ENCODE measurements at regions of chr19 and their contacts with region 1.

Region 1: DNA sequence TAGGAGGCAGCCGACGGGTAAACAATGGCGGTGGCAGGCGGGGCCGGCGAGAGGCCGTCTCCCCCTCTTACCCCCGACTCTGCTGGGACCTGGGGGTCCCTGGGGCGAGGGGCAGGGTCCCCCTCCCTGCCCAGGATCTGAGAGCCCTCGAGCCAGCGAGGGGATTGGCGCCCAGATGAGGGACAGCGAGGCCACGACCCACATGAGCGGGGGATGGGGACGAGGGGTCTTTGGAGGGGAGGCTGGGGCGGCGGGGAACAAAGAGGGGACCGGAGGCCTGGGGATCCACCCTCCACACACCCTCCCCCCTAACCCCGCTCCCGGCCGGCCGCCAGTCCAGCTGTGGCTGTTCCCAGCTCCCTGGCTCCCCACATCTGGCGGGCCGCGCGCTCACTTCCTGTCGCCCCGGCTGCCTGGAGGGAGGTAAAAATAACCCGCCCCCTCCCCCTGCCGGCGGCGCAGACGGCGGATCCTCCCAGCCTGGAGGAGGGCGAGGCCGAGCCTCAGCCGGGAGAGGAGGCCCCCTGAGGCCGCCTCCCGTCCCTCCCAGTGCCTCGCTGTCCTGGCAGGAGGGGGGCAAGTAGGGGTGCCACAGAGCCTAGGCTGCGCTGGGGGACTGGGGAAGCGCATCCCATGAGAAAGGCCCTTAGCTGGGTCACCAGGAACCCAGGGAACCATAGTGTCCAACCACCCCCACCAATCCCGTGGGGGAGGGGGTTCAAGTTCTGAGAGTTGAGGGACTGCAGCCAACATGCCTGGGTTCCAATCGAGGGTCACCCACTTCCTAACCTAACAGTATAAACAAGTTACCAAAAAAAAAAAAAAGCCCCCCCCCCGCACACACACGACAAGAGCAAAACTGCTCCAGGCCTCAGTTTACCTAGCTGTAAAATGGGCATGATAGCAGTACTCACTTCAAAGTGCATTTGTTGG is 29.3 kb upstream of the NANOS3 start:
- DNase-seq: no peak
- ATAC-seq: peak; percentile 46
- H3K4me3 ChIP-seq: peak overlapping the region; percentile 31 to 45
- H3K27ac ChIP-seq: peak overlapping the region; percentile 98
- H3K4me1 ChIP-seq: peaks cover 74% of the 10 kb centered on the region
- H3K27me3 ChIP-seq: no peaks in the 10 kb centered on the region
- CTCF ChIP-seq: no peak

Region 2: DNA sequence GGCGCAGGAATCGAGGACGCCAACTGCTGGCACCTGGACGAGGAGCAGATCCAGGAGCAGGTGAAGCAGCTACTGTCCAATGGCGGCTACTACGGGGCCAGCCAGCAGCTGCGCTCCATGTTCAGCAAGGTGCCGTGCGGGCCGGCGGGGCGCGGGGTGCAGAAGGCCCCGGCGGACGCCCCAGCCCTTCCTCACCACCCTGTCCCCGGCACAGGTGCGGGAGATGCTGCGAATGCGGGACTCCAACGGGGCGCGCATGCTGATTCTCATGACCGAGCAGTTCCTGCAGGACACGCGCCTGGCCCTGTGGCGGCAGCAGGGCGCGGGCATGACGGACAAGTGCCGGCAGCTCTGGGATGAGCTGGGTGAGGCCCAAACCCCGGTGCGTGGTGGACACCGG is 38.8 kb before region 1 on chr19:
- CTCF ChIA-PET with region 1: no interaction called
- POLR2A ChIA-PET with region 1: interaction called, 11 read pairs
- in situ Hi-C with region 1: no loop called
- intact Hi-C with region 1: no loop called
- DNase-seq: no peak
- ATAC-seq: no peak
- H3K4me3 ChIP-seq: no peak overlapping the region
- H3K27ac ChIP-seq: no peak overlapping the region
- H3K4me1 ChIP-seq: no peaks in the 10 kb centered on the region
- H3K27me3 ChIP-seq: no peaks in the 10 kb centered on the region
- CTCF ChIP-seq: no peak

Region 3: DNA sequence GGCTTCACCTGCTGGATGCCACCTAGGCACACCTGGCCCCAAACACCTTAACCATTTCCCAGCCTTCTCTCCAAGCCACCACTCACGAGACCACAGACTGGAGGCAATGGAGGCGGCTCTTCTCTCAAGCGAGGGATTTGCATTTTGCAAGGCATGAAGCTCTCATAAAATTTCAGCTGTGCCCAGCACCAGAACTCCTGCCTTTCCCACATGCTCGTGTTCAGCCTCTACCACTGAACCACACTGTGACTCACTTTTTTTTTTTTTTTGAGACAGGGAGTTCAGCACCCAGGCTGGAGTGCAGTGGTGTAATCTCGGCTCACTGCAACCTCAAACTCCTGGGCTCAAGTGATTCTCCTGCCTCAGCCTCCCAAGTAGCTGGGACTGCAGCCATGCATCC is 39.8 kb after region 1 on chr19:
- CTCF ChIA-PET with region 1: no interaction called
- POLR2A ChIA-PET with region 1: no interaction called
- in situ Hi-C with region 1: no loop called
- intact Hi-C with region 1: no loop called
- DNase-seq: no peak
- ATAC-seq: no peak
- H3K4me3 ChIP-seq: no peak overlapping the region
- H3K27ac ChIP-seq: no peak overlapping the region
- H3K4me1 ChIP-seq: no peaks in the 10 kb centered on the region
- H3K27me3 ChIP-seq: no peaks in the 10 kb centered on the region
- CTCF ChIP-seq: no peak

Region 4: GRCh38 chr19:15038297-15038696 is 1190.6 kb after region 1 on chr19:
- CTCF ChIA-PET with region 1: no interaction called
- POLR2A ChIA-PET with region 1: no interaction called
- in situ Hi-C with region 1: no loop called
- intact Hi-C with region 1: no loop called
- DNase-seq: no peak
- ATAC-seq: no peak
- H3K4me3 ChIP-seq: no peak overlapping the region
- H3K27ac ChIP-seq: no peak overlapping the region
- H3K4me1 ChIP-seq: 0 out of 2 replicates have a peak, but pooled peaks cover 4% of the 10 kb centered on the region
- H3K27me3 ChIP-seq: no peaks in the 10 kb centered on the region
- CTCF ChIP-seq: no peak

Measured in Panc1 (cell line).